AG04450 (cell line): ENCODE measurements at regions of chr9 and their contacts with region 1.

Region 1: GRCh38 chr9:35732122-35732799 is at the starts of genes CREB3 and TLN1:
- DNase-seq: peak; percentile 98
- H3K4me3 ChIP-seq: peak within 1 kb of the TSS; percentile 98
- H3K27ac ChIP-seq: peak within 1 kb of the TSS; percentile 92
- H3K27me3 ChIP-seq: no peaks in the 10 kb centered on the region
- CTCF ChIP-seq: no peak
- polyA plus RNA-seq, gene CREB3: 51.1 and 58.1 TPM in 2 replicates
- polyA plus RNA-seq, gene TLN1: 165 and 224 TPM in 2 replicates

Region 2: DNA sequence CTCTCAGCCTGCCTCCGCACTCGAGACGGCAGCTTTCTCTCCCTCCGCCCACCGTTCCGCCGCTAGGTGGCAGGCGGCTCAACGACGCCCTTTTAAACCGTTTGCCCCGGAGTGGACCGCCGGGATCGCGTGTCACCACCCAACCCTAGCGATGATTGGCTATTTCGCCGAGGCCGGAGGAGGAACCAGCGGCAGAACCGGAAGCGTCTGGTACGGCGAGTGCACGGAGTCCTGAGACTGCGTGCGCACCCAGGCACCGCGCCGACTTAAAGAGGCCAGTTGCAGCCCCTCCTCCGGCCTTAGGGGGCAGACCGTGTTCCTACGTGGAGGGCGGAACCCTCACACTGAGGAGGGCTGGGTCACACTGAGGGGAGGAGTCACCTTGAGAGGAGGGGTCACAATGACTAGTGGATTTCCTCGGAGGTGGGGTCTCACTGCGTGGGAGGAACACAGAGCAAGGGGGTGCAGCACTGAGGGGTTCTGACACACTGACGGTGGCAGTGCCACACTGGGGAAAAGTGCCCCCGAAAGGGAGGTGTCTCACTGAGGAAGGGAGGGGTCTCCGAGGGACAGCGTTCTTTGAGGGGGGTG is 128.2 kb before region 1 on chr9:
- CTCF ChIA-PET with region 1: interaction called, 12 read pairs
- POLR2A ChIA-PET with region 1: interaction called, 9 read pairs
- DNase-seq: peak; percentile 99
- H3K4me3 ChIP-seq: peak overlapping the region; percentile 77
- H3K27ac ChIP-seq: peak overlapping the region; percentile 98
- H3K27me3 ChIP-seq: no peaks in the 10 kb centered on the region
- CTCF ChIP-seq: peak; percentile 86

Region 3: DNA sequence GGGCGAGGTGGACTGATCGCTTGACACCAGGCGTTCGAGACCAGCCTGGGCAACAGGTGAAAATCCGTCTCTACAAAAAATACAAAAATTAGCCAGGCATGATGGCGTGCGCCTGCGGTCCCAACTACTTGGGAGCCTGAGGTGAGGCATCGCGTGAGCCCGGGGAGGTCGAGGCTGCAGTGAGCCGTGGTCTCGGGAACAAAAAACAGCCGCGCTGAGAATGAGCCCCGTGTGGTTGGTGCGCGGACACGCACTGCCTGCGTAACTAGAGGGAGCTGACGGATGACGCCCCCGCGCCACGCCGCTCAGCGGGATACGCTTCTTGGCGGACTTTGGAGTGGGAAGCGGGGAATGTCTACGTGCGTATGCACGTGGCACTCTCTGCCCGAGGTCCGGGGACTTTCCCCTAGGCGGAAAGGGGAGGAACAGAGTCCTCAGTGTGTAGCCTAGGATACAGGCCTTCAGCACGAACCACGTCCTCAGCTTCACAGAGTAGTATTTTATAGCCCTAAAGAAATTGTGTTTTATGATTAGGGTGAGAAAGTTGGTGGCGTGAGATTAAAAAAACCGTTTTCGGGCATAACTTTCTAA is 74.6 kb before region 1 on chr9 and contains the start of gene RMRP:
- CTCF ChIA-PET with region 1: interaction called, 30 read pairs
- POLR2A ChIA-PET with region 1: interaction called, 14 read pairs
- DNase-seq: peak; percentile 99
- H3K4me3 ChIP-seq: peak within 1 kb of the TSS; percentile 93
- H3K27ac ChIP-seq: peak within 1 kb of the TSS; percentile 96
- H3K27me3 ChIP-seq: no peaks in the 10 kb centered on the region
- CTCF ChIP-seq: peak; percentile 34
- polyA plus RNA-seq, gene RMRP: 173 and 306 TPM in 2 replicates

Region 4: GRCh38 chr9:35690431-35691333 is 41.6 kb before region 1 on chr9:
- CTCF ChIA-PET with region 1: interaction called, 35 read pairs
- POLR2A ChIA-PET with region 1: interaction called, 101 read pairs
- DNase-seq: no peak
- H3K4me3 ChIP-seq: peak overlapping the region; percentile 98
- H3K27ac ChIP-seq: peak overlapping the region; percentile 97
- H3K27me3 ChIP-seq: no peaks in the 10 kb centered on the region
- CTCF ChIP-seq: no peak

Region 5: GRCh38 chr9:35716230-35716629 is 16.0 kb before region 1 on chr9:
- CTCF ChIA-PET with region 1: interaction called, 4 read pairs
- POLR2A ChIA-PET with region 1: interaction called, 17 read pairs
- DNase-seq: no peak
- H3K4me3 ChIP-seq: no peak overlapping the region
- H3K27ac ChIP-seq: peak overlapping the region; percentile 21
- H3K27me3 ChIP-seq: no peaks in the 10 kb centered on the region
- CTCF ChIP-seq: 0 out of 2 replicates have a peak, but pooled peaks have one; percentile 12

Region 6: GRCh38 chr9:35882263-35882848 is 150.1 kb after region 1 on chr9:
- CTCF ChIA-PET with region 1: interaction called, 11 read pairs
- POLR2A ChIA-PET with region 1: no interaction called
- DNase-seq: peak; percentile 39
- H3K4me3 ChIP-seq: no peak overlapping the region
- H3K27ac ChIP-seq: no peak overlapping the region
- H3K27me3 ChIP-seq: peaks cover 4% of the 10 kb centered on the region
- CTCF ChIP-seq: peak; percentile 99

Region 7: GRCh38 chr9:36023260-36024048 is 291.2 kb after region 1 on chr9:
- CTCF ChIA-PET with region 1: no interaction called
- POLR2A ChIA-PET with region 1: no interaction called
- DNase-seq: no peak
- H3K4me3 ChIP-seq: no peak overlapping the region
- H3K27ac ChIP-seq: no peak overlapping the region
- H3K27me3 ChIP-seq: no peaks in the 10 kb centered on the region
- CTCF ChIP-seq: peak; percentile 87